Activated CD8-positive, alpha-beta T cell treated with anti-CD3 and anti-CD28 coated beads for 36 hours (primary cell): ENCODE measurements at regions of chr22 and their contacts with region 1.

Region 1: DNA sequence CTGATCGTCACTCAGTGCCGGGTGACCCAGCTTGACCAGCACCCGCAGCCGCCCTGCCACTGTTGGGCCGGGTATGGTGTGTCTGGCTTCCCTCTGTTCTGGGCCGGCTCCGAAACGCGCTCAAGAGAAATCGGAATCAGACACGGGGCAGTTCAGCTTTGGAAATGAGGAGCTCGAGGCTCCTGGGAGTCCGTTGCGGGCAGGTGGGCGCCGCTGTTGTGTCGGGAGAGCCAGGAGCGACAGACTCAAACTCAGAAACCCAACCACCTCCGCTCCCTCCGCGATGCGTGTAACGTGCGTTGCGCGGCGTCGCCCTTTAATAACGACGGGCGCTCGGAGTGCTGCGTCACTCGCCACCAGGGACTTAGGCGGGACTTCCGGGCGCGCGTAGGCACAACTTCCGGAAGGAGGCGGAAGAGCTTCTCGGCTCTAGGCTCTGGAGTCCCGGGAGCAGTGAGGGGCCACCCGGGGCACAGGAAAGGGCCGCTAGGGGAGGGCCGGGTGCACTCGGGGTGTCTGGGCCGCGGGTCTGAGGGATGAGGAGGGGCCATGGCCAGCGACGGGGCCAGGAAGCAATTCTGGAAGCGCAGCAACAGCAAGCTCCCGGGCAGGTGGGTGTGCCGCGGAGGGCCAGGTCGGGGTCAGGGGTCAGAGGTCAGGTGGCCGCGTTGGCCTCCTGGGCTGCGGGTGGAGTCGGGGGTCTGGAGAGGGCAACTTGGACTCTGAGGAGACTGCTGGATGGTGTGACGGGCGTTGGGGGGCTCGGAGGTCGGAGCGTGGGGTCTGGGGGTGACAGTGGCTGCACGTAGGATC is at the start of gene TBC1D22A:
- DNase-seq: peak; percentile 96
- ATAC-seq: peak; percentile 91
- H3K4me3 Mint-ChIP-seq: peak within 1 kb of the TSS; percentile 94
- H3K27ac Mint-ChIP-seq: peak within 1 kb of the TSS; percentile 99
- H3K4me1 Mint-ChIP-seq: peaks cover 51% of the 10 kb centered on the region
- H3K27me3 Mint-ChIP-seq: no peaks in the 10 kb centered on the region
- CTCF ChIP-seq: no peak
- total RNA-seq, gene TBC1D22A: 41.0 to 42.8 TPM

Region 2: GRCh38 chr22:46661221-46661851 is 101.1 kb before region 1 on chr22:
- CTCF ChIA-PET with region 1: no interaction called
- POLR2A ChIA-PET with region 1: no interaction called
- intact Hi-C with region 1: no loop called
- DNase-seq: peak; percentile 47
- ATAC-seq: peak; percentile 82
- H3K4me3 Mint-ChIP-seq: no peak overlapping the region
- H3K27ac Mint-ChIP-seq: peak overlapping the region; percentile 37
- H3K4me1 Mint-ChIP-seq: peaks cover 21% of the 10 kb centered on the region
- H3K27me3 Mint-ChIP-seq: no peaks in the 10 kb centered on the region
- CTCF ChIP-seq: no peak

Region 3: DNA sequence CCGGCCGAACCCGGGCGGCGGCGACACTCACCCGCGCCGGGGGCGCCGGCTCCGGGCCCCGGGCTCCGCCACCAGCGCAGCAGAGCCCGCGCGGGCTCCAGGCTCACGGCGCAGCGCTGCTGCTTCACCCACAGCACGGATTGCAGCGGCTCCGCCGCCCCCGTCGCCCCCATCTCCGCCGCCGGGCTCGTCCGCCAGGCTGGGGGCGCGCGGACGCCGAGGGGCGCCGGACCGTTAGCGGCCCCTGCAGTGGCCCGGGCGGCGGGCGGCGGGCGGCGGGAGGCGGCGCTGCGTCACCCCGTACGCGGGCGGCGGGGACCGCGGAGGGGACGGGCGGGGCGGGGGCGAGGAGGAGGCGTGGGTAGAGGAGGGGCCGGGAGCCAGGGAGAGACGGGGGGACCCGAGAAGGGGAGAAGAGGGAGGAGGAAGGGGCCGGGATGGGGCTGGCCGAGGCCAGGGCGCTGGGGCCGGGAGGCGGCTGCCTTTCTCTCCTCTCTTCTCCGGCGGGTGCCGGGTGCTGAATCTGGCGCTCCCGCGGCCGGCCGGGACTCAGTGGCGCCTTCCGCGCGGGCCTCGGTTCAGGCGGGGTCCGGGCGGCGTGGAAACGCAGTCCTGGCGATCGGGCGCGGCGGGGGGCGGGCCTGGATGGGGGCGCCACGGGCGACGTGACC is 24.3 kb before region 1 on chr22 and contains the start of gene CERK:
- CTCF ChIA-PET with region 1: interaction called, 20 read pairs
- POLR2A ChIA-PET with region 1: interaction called, 11 read pairs
- intact Hi-C with region 1: no loop called
- DNase-seq: peak; percentile 43
- ATAC-seq: peak; percentile 43
- H3K4me3 Mint-ChIP-seq: peak within 1 kb of the TSS; percentile 93
- H3K27ac Mint-ChIP-seq: peak within 1 kb of the TSS; percentile 98
- H3K4me1 Mint-ChIP-seq: peaks cover 36% of the 10 kb centered on the region
- H3K27me3 Mint-ChIP-seq: no peaks in the 10 kb centered on the region
- CTCF ChIP-seq: no peak
- total RNA-seq, gene CERK: 38.4 to 41.8 TPM

Region 4: GRCh38 chr22:46748908-46749675 is 13.4 kb before region 1 on chr22:
- CTCF ChIA-PET with region 1: interaction called, 43 read pairs
- POLR2A ChIA-PET with region 1: interaction called, 13 read pairs
- intact Hi-C with region 1: no loop called
- DNase-seq: peak; percentile 72
- ATAC-seq: peak; percentile 88
- H3K4me3 Mint-ChIP-seq: peak overlapping the region; percentile 51
- H3K27ac Mint-ChIP-seq: peak overlapping the region; percentile 87
- H3K4me1 Mint-ChIP-seq: peaks cover 27% of the 10 kb centered on the region
- H3K27me3 Mint-ChIP-seq: no peaks in the 10 kb centered on the region
- CTCF ChIP-seq: no peak

Region 5: GRCh38 chr22:46774253-46774979 is 12.0 kb after region 1 on chr22:
- CTCF ChIA-PET with region 1: interaction called, 26 read pairs
- POLR2A ChIA-PET with region 1: interaction called, 29 read pairs
- intact Hi-C with region 1: no loop called
- DNase-seq: peak; percentile 51
- ATAC-seq: peak; percentile 26
- H3K4me3 Mint-ChIP-seq: peak overlapping the region; percentile 69
- H3K27ac Mint-ChIP-seq: peak overlapping the region; percentile 60
- H3K4me1 Mint-ChIP-seq: peaks cover 73% of the 10 kb centered on the region
- H3K27me3 Mint-ChIP-seq: no peaks in the 10 kb centered on the region
- CTCF ChIP-seq: no peak

Region 6: GRCh38 chr22:46791201-46791731 is 28.8 kb after region 1 on chr22:
- CTCF ChIA-PET with region 1: interaction called, 13 read pairs
- POLR2A ChIA-PET with region 1: interaction called, 4 read pairs
- intact Hi-C with region 1: no loop called
- DNase-seq: peak; percentile 88
- ATAC-seq: peak; percentile 97
- H3K4me3 Mint-ChIP-seq: peak overlapping the region; percentile 72
- H3K27ac Mint-ChIP-seq: peak overlapping the region; percentile 96
- H3K4me1 Mint-ChIP-seq: peaks cover 48% of the 10 kb centered on the region
- H3K27me3 Mint-ChIP-seq: no peaks in the 10 kb centered on the region
- CTCF ChIP-seq: no peak